H1 (cell line): ENCODE measurements at regions of chr7 and their contacts with region 1.

Region 1: GRCh38 chr7:45259966-45260646 is 102.5 kb downstream of the RAMP3 start:
- DNase-seq: peak; percentile 41 to 98
- H3K4me3 ChIP-seq: no peak overlapping the region
- H3K27ac ChIP-seq: no peak overlapping the region
- H3K4me1 ChIP-seq: no peaks in the 10 kb centered on the region
- H3K27me3 ChIP-seq: peaks cover 0 to 3% (median 3%) of the 10 kb centered on the region in 4 experiments; a peak in 3 of 7 replicates
- CTCF ChIP-seq: peak; percentile 95 to 98 (median 97)
- EP300 ChIP-seq: no peak
- POLR2A ChIP-seq: no peak
- RAD21 ChIP-seq: peak; percentile 94 to 96

Region 2: GRCh38 chr7:45157653-45158401 is 102.3 kb before region 1 on chr7 and contains the start of gene RAMP3:
- CTCF ChIA-PET with region 1: interaction called, 56 read pairs
- POLR2A ChIA-PET with region 1: interaction called, 3 read pairs
- DNase-seq: peak in 1 of 2 experiments; percentile 67
- H3K4me3 ChIP-seq: peak within 1 kb of the TSS; percentile 51 to 83 (median 53)
- H3K27ac ChIP-seq: no peak within 1 kb of the TSS
- H3K4me1 ChIP-seq: peaks cover 0 to 5% (median 0%) of the 10 kb centered on the region in 4 experiments; a peak in 3 of 7 replicates
- H3K27me3 ChIP-seq: peaks cover 0 to 24% (median 16%) of the 10 kb centered on the region in 4 experiments; a peak in 5 of 7 replicates
- CTCF ChIP-seq: no peak
- EP300 ChIP-seq: no peak
- POLR2A ChIP-seq: no peak
- RAD21 ChIP-seq: no peak
- total RNA-seq, gene RAMP3: 0.88 and 0.92 TPM in 2 replicates

Region 3: DNA sequence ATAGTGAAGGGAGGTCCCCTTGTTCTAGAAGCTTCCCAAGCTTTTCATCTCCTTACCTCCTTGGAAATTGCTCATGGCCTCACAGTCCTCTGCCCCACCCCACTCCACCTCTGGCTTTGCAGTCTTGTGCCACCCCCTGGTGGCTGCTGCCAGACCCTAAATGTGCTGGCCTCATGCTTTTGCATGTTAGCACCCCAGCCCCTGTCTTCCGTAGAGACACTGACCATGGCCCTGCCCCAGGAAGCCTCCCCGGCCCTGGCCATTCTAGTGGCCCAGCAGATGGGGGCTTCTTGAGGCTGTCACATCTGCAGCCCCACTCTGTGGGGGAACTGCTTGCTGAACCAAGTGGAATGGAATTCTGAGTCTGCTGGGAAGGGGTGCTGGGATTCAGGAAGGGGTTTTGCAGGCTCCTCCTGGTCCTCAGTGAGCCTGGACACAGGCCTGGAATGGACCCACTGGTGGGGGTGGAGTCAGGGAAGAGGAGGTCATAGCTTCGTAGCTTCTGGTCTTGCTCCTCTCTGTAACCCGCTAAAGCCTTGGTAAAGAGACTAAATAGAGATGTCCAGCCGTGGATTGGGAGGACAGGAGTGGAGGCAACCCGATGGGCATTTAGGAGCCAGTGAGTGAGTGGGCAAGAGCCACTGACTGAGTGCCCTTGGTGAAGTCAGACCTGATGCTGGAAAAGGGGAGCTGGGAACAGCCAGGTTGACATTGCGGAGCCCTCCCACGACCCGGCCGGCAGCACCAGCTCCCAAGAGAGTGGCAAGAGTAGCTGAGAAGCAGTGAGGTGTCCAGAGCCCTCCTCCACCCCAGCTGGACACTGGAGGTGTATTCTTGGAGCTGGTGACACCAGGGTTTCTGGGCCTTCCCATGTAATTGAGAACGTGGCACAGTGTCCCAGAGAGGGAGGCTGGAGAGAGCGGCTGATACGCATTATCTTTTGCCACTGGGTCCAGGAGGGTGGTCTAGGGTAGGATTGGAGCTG is 81.6 kb before region 1 on chr7:
- CTCF ChIA-PET with region 1: interaction called, 14 read pairs
- POLR2A ChIA-PET with region 1: interaction called, 3 read pairs
- DNase-seq: no peak
- H3K4me3 ChIP-seq: no peak overlapping the region
- H3K27ac ChIP-seq: no peak overlapping the region
- H3K4me1 ChIP-seq: no peaks in the 10 kb centered on the region; a peak in 1 of 7 replicates
- H3K27me3 ChIP-seq: no peaks in the 10 kb centered on the region
- CTCF ChIP-seq: peak; percentile 48 to 58 (median 53)
- EP300 ChIP-seq: no peak
- POLR2A ChIP-seq: no peak
- RAD21 ChIP-seq: peak; percentile 69 to 77

Region 4: GRCh38 chr7:45217358-45217757 is 42.7 kb before region 1 on chr7:
- CTCF ChIA-PET with region 1: interaction called, 14 read pairs
- POLR2A ChIA-PET with region 1: interaction called, 3 read pairs
- DNase-seq: no peak
- H3K4me3 ChIP-seq: no peak overlapping the region
- H3K27ac ChIP-seq: no peak overlapping the region
- H3K4me1 ChIP-seq: no peaks in the 10 kb centered on the region; a peak in 1 of 7 replicates
- H3K27me3 ChIP-seq: no peaks in the 10 kb centered on the region
- CTCF ChIP-seq: no peak
- EP300 ChIP-seq: no peak
- POLR2A ChIP-seq: no peak
- RAD21 ChIP-seq: no peak

Region 5: DNA sequence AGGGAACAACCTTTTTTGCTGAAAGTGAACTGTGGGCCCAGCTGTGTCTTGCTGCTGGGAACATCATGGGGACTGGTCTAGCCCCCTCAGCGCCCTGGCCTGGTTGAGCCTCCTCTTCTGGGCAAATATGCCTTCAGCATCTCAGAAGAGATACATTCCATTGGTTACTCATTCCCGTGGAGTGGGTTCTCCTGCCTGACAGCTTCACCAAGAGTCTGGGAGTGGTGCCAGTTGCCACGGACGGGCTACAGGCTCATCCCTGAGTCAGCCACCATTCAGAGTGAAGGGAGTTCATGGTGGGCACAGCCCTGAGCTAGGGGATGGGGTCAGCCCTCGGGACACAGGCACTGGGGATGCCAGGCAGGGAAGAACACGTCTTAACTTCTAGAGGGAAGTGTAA is 20.6 kb before region 1 on chr7:
- CTCF ChIA-PET with region 1: interaction called, 32 read pairs
- POLR2A ChIA-PET with region 1: no interaction called
- DNase-seq: peak in 1 of 2 experiments; percentile 27
- H3K4me3 ChIP-seq: no peak overlapping the region
- H3K27ac ChIP-seq: no peak overlapping the region
- H3K4me1 ChIP-seq: no peaks in the 10 kb centered on the region; a peak in 1 of 7 replicates
- H3K27me3 ChIP-seq: no peaks in the 10 kb centered on the region; a peak in 1 of 7 replicates
- CTCF ChIP-seq: no peak
- EP300 ChIP-seq: no peak
- POLR2A ChIP-seq: no peak
- RAD21 ChIP-seq: no peak

Region 6: GRCh38 chr7:45324791-45325190 is 64.7 kb after region 1 on chr7:
- CTCF ChIA-PET with region 1: no interaction called
- POLR2A ChIA-PET with region 1: no interaction called
- DNase-seq: no peak
- H3K4me3 ChIP-seq: no peak overlapping the region
- H3K27ac ChIP-seq: no peak overlapping the region
- H3K4me1 ChIP-seq: no peaks in the 10 kb centered on the region
- H3K27me3 ChIP-seq: no peaks in the 10 kb centered on the region
- CTCF ChIP-seq: no peak
- EP300 ChIP-seq: no peak
- POLR2A ChIP-seq: no peak
- RAD21 ChIP-seq: no peak